MCF 10A (cell line): ENCODE measurements at regions of chr1 and their contacts with region 1.

Region 1: DNA sequence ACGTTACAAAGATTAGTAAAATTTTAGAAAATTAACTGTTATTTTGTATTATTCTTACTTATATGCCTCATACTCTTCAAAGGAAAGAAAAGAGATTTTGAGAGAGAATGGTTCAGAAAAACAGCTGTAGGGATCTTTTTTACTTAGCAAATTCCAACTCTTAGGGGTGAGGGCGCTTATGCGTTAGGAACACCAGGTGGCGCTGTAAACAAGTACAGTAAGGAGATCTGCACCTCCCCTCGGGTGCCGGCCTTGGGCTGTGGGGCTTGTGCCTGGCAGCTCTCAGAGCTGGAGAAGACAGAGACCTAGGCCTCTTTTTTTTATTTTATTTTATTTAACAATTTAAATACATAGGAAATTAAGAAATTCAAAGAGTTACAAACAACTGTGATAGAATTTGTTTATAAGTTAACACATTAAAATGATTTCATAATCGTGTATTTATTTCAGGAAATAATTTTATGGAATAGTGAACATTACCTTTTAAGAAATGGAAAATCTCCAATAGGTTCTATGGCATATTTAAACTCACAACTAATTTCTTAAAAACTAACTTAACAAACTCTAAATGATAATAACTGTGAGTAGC is 32.6 kb downstream of the UTP25 start:
- DNase-seq: peak; percentile 94
- H3K4me3 Mint-ChIP-seq: no peak overlapping the region
- H3K27ac Mint-ChIP-seq: peak overlapping the region; percentile 73
- H3K4me1 Mint-ChIP-seq: peaks cover 43% of the 10 kb centered on the region
- H3K27me3 Mint-ChIP-seq: no peaks in the 10 kb centered on the region
- CTCF ChIP-seq: peak; percentile 99

Region 2: GRCh38 chr1:209890641-209891330 is 30.4 kb after region 1 on chr1:
- CTCF ChIA-PET with region 1: interaction called, 55 read pairs
- POLR2A ChIA-PET with region 1: interaction called, 9 read pairs
- intact Hi-C with region 1: loop called (anchors 1 kb)
- DNase-seq: peak; percentile 46
- H3K4me3 Mint-ChIP-seq: no peak overlapping the region
- H3K27ac Mint-ChIP-seq: peak overlapping the region; percentile 91
- H3K4me1 Mint-ChIP-seq: peaks cover 51% of the 10 kb centered on the region
- H3K27me3 Mint-ChIP-seq: no peaks in the 10 kb centered on the region
- CTCF ChIP-seq: no peak

Region 3: GRCh38 chr1:209899948-209900347 is 39.6 kb after region 1 on chr1:
- CTCF ChIA-PET with region 1: interaction called, 16 read pairs
- POLR2A ChIA-PET with region 1: interaction called, 9 read pairs
- intact Hi-C with region 1: no loop called
- DNase-seq: peak; percentile 54
- H3K4me3 Mint-ChIP-seq: no peak overlapping the region
- H3K27ac Mint-ChIP-seq: peak overlapping the region; percentile 70
- H3K4me1 Mint-ChIP-seq: peaks cover 45% of the 10 kb centered on the region
- H3K27me3 Mint-ChIP-seq: no peaks in the 10 kb centered on the region
- CTCF ChIP-seq: peak; percentile 36

Region 4: DNA sequence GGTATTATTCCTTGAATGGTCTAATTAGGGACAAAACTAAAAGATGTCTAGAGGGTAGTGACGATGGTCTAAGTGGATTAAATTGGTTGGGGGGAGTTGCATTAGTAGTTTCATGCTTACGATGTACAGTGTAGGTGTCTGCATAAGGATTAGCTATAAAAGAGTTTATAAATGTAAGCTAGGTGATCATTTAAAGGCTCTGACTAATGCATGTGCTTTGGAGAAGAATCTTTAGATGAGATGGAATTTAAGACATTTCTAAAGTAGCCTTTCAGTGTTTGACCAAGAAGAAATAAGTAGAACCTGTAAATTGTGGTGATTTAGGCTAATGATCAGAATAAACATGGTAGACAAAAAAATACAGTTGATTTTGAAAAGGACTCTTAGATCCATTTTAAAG is 85.0 kb after region 1 on chr1:
- CTCF ChIA-PET with region 1: interaction called, 10 read pairs
- POLR2A ChIA-PET with region 1: interaction called, 4 read pairs
- intact Hi-C with region 1: no loop called
- DNase-seq: no peak
- H3K4me3 Mint-ChIP-seq: no peak overlapping the region
- H3K27ac Mint-ChIP-seq: no peak overlapping the region
- H3K4me1 Mint-ChIP-seq: no peaks in the 10 kb centered on the region
- H3K27me3 Mint-ChIP-seq: no peaks in the 10 kb centered on the region
- CTCF ChIP-seq: no peak